Activated CD4-positive, alpha-beta memory T cell treated with anti-CD3 and anti-CD28 coated beads, Interleukin-2, amount 10 ng/mL, durations not matched to agents 7 days and 5 days (primary cell): ENCODE measurements at regions of chr16 and their contacts with region 1.

Region 1: DNA sequence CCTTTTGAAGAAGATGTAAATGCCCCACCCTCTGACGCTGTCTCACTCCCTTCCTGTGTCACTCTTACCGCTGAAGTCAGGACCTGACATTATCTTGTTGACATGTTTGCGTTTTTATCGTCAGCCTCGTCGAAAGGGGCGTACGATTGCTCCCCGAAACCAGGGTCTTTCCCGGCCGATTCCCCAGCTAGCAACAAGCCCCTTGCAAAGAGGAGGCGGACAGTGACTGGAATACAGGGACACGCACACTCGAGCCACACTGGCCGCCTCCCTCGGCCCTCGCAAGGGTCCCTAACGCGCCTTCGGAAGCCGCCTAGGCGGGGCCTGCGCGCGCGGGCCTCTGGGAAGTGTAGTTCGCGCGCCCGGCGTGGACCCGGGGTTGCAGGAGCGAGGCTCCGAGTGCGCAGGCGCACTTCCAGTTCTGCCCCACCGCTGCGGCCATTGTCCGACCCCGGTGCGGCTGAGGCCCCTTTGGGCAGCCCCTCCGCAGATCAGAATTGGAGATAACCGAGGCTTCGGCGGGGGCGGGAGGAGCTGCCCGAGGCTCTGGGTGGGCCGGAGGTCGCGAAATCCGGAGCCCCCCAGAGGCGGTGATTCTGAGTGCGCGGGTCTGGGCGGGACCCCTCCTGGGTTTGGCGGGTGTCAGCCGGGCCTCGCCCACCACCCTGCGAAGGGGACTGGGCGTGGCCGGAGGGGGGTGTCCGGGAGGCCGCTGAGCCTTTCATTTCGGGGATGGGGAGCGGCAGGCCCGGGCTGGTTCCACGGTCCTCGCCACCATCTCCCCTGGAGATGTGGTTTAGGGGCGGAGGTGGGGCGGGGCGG is at the start of gene ZFP90:
- DNase-seq: peak; percentile 88
- H3K4me3 Mint-ChIP-seq: peak within 1 kb of the TSS; percentile 90
- H3K27ac Mint-ChIP-seq: peak within 1 kb of the TSS; percentile 95
- H3K4me1 Mint-ChIP-seq: peaks cover 19% of the 10 kb centered on the region
- H3K27me3 Mint-ChIP-seq: no peaks in the 10 kb centered on the region
- total RNA-seq, gene ZFP90: 35.2 to 36.5 TPM

Region 2: DNA sequence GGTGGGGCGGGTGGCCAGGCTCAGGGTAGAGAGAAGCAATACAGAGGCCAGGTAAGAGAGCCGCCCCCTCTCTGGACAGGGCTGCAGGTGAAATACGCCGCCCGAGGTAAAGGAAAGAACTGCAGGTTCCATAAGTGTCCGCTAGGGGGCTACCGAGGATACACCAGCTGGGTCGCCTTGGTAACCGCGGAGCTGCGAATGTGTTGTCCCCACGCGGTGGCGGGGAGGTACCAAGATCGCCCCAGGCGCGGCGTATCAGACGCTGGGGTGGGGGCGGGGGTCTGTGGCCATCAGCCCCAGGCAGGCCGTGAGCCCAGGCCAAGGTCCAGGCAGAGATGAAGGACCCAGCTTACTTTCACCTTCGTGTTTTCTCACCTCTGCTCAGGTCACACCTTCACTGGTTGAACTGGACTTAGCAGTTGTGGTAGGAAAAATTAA is 18.4 kb before region 1 on chr16:
- CTCF ChIA-PET with region 1: interaction called, 22 read pairs
- POLR2A ChIA-PET with region 1: interaction called, 4 read pairs
- DNase-seq: peak; percentile 87
- H3K4me3 Mint-ChIP-seq: no peak overlapping the region
- H3K27ac Mint-ChIP-seq: no peak overlapping the region
- H3K4me1 Mint-ChIP-seq: peaks cover 6% of the 10 kb centered on the region
- H3K27me3 Mint-ChIP-seq: peaks cover 5% of the 10 kb centered on the region

Region 3: DNA sequence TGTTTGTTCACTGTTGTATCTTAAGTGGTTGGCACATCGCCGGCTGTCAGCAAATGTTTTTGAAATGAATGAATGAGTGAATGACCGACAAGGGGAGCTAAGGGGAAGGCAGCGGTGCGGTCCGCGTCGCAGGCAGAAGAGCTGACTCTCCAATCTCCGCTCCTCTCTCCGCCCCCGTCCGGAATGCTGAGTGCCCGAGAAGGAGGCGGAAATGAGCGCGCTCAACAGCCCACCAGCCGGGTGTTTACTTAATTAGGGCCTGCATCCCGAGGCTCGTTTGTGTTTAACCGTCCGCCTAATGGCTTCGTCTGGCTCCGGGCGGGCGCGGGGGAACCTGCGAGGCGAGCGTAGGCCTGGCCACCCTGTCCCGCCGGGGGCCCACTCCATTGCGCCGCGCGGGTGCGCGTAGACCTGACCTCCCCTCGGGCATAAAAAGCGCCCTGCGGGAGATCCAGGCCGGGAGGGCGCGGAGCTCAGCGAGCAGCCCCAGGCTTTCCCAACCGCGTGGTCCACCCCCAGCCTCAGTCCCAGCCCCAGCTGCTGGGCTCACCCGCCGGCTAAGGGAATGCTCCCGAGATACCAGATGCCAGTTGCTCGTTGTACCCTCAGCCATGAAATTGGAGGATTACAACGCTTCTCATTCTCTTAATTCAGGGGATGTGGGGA is 103.5 kb after region 1 on chr16:
- CTCF ChIA-PET with region 1: no interaction called
- POLR2A ChIA-PET with region 1: no interaction called
- DNase-seq: no peak
- H3K4me3 Mint-ChIP-seq: no peak overlapping the region
- H3K27ac Mint-ChIP-seq: no peak overlapping the region
- H3K4me1 Mint-ChIP-seq: peaks cover 12% of the 10 kb centered on the region
- H3K27me3 Mint-ChIP-seq: peaks cover 49% of the 10 kb centered on the region